ENCODE measurements at regions of chr11 and their contacts with region 1.

Region 1: DNA sequence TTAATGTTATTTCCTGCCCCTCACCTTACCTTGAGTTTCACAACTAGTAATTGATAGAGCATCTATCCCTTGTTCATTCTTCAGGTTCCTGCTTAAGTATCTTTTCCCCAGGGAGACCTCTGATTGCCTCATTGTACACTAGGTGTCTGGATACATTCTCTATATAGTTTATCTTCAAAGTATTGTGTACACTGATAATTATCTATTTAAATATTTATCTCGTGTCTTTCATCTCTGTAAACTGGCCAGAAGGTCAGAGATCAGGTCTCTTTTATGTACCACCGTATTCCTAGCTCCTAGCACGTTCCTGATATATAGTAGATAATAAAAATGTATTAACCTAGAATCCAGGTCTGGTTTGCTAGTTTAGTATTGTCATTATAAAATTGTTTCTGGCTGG is 6.4 kb downstream of the TMEM126B start:
- DNase-seq: no peak
- ATAC-seq: no peak
- H3K4me3 ChIP-seq: no peak overlapping the region
- H3K27ac ChIP-seq: no peak overlapping the region
- H3K4me1 ChIP-seq: peaks cover 4% of the 10 kb centered on the region; the same call in 1 of the 2 replicates
- H3K27me3 ChIP-seq: no peaks in the 10 kb centered on the region
- CTCF ChIP-seq: no peak
- EP300 ChIP-seq: no peak
- POLR2A ChIP-seq: no peak
- RAD21 ChIP-seq: no peak

Region 2: DNA sequence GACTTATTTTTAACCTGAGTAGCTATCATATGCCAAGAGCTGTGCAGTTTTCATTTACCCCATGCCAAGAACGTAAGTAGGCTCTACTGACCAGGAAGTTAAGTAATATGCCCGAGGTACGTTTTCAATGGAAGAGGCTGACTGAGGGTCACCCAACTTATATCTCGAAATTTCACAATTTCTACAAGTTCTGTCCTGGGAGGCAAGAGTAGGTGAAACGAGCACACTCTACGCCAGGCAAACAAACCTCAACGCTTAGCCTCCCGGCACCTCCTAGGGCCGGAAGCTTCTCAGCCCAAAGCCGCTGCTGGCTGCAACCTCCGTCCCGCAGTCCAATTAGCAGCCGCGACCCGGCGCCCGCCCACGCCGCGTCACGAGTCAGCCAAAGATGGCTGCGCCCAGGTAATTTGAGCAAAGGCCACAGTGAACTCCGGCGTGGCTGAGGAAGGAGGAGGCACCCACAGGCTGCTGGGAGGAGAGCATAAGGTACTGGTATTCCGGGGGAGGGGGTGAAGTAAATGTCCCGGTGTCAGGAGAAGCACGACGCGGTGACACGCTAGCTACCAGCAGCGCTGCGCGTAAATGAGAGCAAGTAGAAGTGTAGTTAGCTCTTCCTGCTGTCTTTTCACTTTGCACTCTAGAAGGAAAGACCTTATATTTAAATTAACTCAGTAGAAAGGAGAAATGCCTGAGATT is 13.0 kb after region 1 on chr11 and contains the start of gene TMEM126A:
- CTCF ChIA-PET with region 1: interaction called, 7 read pairs
- POLR2A ChIA-PET with region 1: interaction called, 35 read pairs
- RAD21 ChIA-PET with region 1: interaction called, 5 read pairs
- SMC1A ChIA-PET with region 1: interaction called, 13 read pairs
- in situ Hi-C with region 1: no loop called
- intact Hi-C with region 1: no loop called
- DNase-seq: peak; percentile 64
- ATAC-seq: peak; percentile 99
- H3K4me3 ChIP-seq: peak within 1 kb of the TSS; percentile 77
- H3K27ac ChIP-seq: peak within 1 kb of the TSS; percentile 85
- H3K4me1 ChIP-seq: no peaks in the 10 kb centered on the region; the same call in 1 of the 2 replicates
- H3K27me3 ChIP-seq: no peaks in the 10 kb centered on the region
- CTCF ChIP-seq: no peak
- EP300 ChIP-seq: no peak
- POLR2A ChIP-seq: peak; percentile 97
- RAD21 ChIP-seq: no peak
- polyA plus RNA-seq, gene TMEM126A: 184 to 208 TPM

Region 3: DNA sequence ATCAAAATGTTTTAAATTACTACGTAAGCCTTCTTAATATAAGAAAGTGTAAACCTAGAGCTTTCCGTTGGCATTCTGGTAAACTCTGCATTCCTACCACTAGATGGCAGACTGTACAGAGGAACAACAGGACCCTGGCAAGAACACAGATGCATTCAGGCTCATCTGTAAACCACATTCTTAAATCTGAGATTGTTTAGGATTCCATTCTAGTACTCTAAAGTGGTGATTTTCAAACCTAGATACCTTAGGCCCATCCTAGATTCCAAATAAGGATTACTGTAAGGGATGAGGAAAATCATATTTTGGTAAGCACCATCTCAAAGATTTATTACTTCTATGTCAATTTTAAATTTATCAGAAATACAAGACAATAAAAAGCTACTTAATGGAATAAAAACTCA is 407.2 kb after region 1 on chr11:
- CTCF ChIA-PET with region 1: no interaction called
- POLR2A ChIA-PET with region 1: no interaction called
- RAD21 ChIA-PET with region 1: no interaction called
- SMC1A ChIA-PET with region 1: no interaction called
- in situ Hi-C with region 1: no loop called
- intact Hi-C with region 1: no loop called
- DNase-seq: peak; percentile 60
- ATAC-seq: peak; percentile 83
- H3K4me3 ChIP-seq: no peak overlapping the region
- H3K27ac ChIP-seq: no peak overlapping the region
- H3K4me1 ChIP-seq: peaks cover 42% of the 10 kb centered on the region
- H3K27me3 ChIP-seq: no peaks in the 10 kb centered on the region
- CTCF ChIP-seq: peak; percentile 77 to 89 (median 81)
- EP300 ChIP-seq: no peak
- POLR2A ChIP-seq: no peak
- RAD21 ChIP-seq: peak; percentile 97